PC-3 (cell line): ENCODE measurements at regions of chr2 and their contacts with region 1.

Region 1: GRCh38 chr2:18991177-18992168 is 366.9 kb downstream of the OSR1 start:
- DNase-seq: peak; percentile 94
- ATAC-seq: peak; percentile 84
- H3K4me3 ChIP-seq: peak overlapping the region; percentile 33; the same call in 1 of the 2 replicates
- H3K27ac ChIP-seq: peak overlapping the region; percentile 80
- H3K4me1 ChIP-seq: peaks cover 33% of the 10 kb centered on the region
- H3K27me3 ChIP-seq: no peaks in the 10 kb centered on the region
- CTCF ChIP-seq: no peak

Region 2: GRCh38 chr2:18435421-18436037 is 555.9 kb before region 1 on chr2:
- CTCF ChIA-PET with region 1: no interaction called
- POLR2A ChIA-PET with region 1: no interaction called
- intact Hi-C with region 1: loop called (anchors 5 kb)
- DNase-seq: peak; percentile 82
- ATAC-seq: peak; percentile 61
- H3K4me3 ChIP-seq: no peak overlapping the region
- H3K27ac ChIP-seq: no peak overlapping the region
- H3K4me1 ChIP-seq: peaks cover 17% of the 10 kb centered on the region
- H3K27me3 ChIP-seq: no peaks in the 10 kb centered on the region
- CTCF ChIP-seq: peak; percentile 86

Region 3: DNA sequence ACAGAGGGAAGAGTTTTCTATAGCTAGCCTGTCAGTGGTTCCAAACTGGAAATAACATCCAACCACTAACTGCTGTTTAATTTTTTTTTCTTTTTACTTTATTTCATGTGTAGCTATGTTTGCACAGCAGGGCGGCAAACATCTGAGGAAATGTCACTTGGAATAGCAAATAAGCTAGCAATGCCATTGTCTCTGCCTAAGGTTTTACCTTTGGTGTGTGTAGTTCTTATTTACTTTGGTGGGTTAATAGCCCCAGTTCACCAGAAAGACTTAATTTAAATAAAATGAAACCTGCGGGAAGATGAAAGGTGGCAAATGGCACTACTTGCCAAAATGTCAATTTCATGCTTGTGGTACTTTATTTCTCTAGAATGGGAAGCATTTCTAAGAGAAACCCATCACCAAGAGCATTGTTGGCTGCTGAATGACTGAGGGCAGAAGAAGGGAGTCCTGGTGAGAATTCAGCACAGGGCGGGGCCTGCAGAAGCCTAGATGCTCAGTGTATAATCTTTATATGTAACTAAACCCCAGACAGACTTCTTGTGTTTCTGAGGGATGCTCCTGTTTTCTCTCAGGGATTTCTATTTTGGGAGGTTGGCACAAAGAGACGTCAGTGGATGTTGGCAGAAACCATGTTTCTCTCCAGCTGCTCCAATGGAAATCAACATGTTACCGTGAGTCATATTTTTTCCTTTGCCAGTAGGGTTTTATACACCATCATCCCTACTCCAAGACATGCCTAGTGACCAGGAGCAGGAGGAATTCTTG is 101.7 kb before region 1 on chr2:
- CTCF ChIA-PET with region 1: no interaction called
- POLR2A ChIA-PET with region 1: no interaction called
- intact Hi-C with region 1: loop called (anchors 5 kb)
- DNase-seq: no peak
- ATAC-seq: no peak
- H3K4me3 ChIP-seq: no peak overlapping the region
- H3K27ac ChIP-seq: no peak overlapping the region
- H3K4me1 ChIP-seq: no peaks in the 10 kb centered on the region
- H3K27me3 ChIP-seq: no peaks in the 10 kb centered on the region
- CTCF ChIP-seq: no peak

Region 4: DNA sequence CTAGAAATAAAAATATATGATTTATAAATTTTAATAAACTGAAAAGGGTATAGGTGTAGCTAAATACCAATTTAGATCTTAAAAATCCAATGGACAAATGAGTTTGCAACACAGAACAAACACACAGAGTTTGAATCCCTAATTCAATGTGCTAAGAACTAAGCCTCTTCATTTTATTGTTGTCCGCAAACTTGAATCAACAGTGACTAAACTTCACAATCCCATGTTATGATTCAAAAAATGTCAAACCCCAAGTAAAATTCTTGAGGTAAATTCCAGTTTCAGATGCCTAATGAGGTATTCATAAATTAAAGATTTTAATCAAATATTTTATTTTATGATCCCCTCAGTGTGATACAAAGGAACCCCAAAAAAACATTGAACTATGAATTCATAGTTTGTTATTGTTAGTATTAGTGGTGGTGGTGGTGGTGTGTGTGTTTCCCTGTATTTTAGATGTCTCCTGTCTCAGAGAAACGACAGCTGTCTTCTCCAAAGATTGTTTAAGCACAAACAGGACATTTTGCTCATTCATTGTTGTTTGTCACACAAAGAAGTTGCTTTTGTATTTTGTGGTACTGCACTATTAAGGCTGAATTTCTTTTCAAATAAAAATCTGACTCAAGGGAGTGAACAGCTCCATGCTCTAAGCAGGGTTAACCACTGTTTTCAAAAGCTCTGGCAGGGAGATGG is 107.1 kb after region 1 on chr2:
- CTCF ChIA-PET with region 1: no interaction called
- POLR2A ChIA-PET with region 1: no interaction called
- intact Hi-C with region 1: loop called (anchors 1 kb)
- DNase-seq: peak; percentile 78
- ATAC-seq: peak; percentile 59
- H3K4me3 ChIP-seq: no peak overlapping the region
- H3K27ac ChIP-seq: peak overlapping the region; percentile 28
- H3K4me1 ChIP-seq: peaks cover 56% of the 10 kb centered on the region
- H3K27me3 ChIP-seq: no peaks in the 10 kb centered on the region
- CTCF ChIP-seq: no peak

Region 5: DNA sequence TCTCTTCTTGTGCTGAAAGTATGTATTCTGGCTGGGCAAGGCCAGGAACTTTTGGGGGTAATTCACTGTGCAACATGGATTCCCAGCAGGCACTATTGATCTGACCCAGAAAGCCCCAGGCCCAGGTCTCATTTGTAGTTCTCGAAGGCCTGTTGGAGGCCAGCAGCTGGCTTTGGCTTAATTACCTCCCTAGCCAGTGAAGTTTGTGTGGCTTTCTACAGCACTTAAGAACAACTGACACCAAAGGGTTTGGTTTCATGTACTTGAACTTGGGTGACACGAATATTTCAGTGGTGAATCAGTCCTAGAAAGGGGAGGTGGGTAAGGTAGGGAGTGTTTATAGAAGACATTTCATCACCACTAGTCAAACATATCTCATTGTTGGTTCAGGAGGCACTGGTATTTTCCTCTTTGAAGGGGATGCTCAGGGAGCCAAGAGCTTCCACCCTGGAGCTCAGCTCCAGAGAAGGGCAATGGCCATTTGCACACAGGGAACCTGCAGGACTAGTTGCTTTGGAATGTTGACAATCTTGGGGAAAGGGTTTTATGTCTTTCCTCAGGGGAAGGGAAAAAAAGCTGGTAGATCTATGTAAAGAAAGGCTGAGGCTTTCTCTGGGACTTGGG is 149.2 kb after region 1 on chr2:
- CTCF ChIA-PET with region 1: no interaction called
- POLR2A ChIA-PET with region 1: no interaction called
- intact Hi-C with region 1: loop called (anchors 1 kb)
- DNase-seq: peak; percentile 99
- ATAC-seq: peak; percentile 94
- H3K4me3 ChIP-seq: peak overlapping the region; percentile 4; the same call in 1 of the 2 replicates
- H3K27ac ChIP-seq: peak overlapping the region; percentile 85
- H3K4me1 ChIP-seq: peaks cover 55% of the 10 kb centered on the region
- H3K27me3 ChIP-seq: no peaks in the 10 kb centered on the region
- CTCF ChIP-seq: no peak